Prostate gland (tissue), 2 donors: ENCODE measurements at regions of chr6 and their contacts with region 1.

Region 1: GRCh38 chr6:31680840-31681671 is at the start of gene LY6G5C:
- DNase-seq: peak; percentile 87
- H3K4me3 ChIP-seq: peak within 1 kb of the TSS; percentile 36 to 46
- H3K27ac ChIP-seq: peak within 1 kb of the TSS; percentile 95
- H3K4me1 ChIP-seq: peaks cover 4% of the 10 kb centered on the region
- H3K27me3 ChIP-seq: no peaks in the 10 kb centered on the region
- CTCF ChIP-seq: peak; percentile 63 to 94 (median 79)
- POLR2A ChIP-seq: peak; percentile 9
- total RNA-seq, gene LY6G5C: 1.6 to 2.6 TPM

Region 2: DNA sequence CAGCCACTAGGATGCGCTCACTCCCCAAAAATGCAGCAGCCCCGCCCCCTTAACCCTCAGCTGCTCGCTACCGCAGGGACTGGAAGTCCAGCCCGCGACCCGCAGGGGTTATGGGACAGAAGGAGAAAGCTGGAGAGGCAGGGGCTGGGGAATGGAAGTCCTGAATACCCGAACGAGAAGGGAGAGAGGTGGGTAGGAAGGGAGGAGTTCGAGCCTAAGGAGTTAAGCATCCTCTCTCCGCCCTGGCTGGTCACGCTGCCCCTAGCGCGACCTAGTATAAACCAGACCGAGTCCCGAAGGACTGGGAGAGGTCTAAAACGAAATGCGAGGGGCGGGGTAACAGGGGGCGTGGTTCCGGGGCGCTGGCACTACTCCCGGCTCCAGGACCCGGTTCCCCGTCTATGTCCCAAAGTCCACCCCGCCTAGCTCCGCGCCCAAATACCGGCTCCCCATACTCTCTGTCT is 48.5 kb after region 1 on chr6:
- intact Hi-C with region 1: loop called (anchors 5 kb)
- DNase-seq: peak; percentile 88
- H3K4me3 ChIP-seq: peak overlapping the region; percentile 83 to 88
- H3K27ac ChIP-seq: peak overlapping the region; percentile 98 to 99
- H3K4me1 ChIP-seq: peaks cover 10% of the 10 kb centered on the region
- H3K27me3 ChIP-seq: no peaks in the 10 kb centered on the region
- CTCF ChIP-seq: peak in 3 of 4 experiments; percentile 68 to 82 (median 77)
- POLR2A ChIP-seq: peak; percentile 70

Region 3: DNA sequence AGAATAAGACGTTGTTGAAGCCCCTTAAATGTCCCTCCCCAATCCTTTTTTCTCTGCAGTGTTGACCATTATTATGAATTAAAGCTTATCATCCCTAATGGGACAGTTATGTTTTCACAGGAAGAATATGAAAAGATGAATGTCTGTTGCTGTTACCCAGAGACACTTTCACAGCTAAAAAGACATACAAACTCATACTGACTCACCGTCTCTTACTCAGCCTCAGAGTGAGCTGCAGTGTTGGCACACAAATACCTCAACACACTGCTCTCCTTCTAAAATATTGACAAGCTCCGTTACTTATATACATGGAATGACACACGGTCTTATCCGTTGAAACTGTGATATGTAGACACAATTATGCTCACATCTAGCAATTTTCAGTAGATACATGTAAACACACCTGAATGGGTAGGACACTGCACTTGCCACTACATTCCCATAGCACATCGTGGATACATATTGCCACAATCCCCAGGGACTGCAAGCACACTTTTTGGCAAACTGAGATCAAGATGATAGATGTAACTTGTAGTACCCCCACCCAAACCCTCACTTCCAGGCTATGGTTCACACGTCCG is 71.8 kb after region 1 on chr6:
- intact Hi-C with region 1: no loop called
- DNase-seq: no peak
- H3K4me3 ChIP-seq: no peak overlapping the region
- H3K27ac ChIP-seq: no peak overlapping the region
- H3K4me1 ChIP-seq: no peaks in the 10 kb centered on the region
- H3K27me3 ChIP-seq: no peaks in the 10 kb centered on the region
- CTCF ChIP-seq: no peak
- POLR2A ChIP-seq: no peak

Region 4: DNA sequence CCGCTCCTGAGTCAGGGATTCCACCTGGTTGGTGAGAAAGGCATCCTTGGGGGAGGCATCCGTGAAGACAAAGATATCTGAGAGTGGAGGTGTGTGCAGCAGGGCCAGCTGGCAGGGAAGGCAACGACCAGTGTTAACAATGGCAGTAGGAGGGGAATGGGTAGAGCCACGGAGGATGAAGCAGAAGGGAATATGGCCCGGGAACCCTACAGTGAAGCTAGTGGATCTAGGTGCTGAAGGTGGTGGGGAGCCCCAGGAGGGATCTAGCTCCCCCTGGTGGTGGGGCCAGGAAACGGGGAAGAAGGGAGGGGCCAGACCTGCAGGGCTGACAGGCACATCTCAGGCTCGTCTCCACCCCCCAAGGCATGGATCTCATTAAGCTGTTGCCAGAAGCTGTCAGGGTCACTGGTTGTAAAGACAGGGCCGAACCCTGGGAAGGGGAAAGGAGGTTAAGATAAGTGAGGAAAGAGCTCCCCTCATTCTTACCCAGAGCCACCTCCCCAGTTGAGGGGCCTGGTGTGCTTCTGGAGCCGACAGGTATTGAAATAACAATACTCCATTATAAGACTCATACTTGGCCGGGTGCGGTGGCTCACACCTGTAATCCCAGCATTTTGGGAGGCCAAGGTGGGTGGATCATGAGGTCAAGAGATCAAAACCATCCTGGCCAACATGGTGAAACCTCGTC is 88.8 kb after region 1 on chr6:
- intact Hi-C with region 1: loop called (anchors 5 kb)
- DNase-seq: peak; percentile 65
- H3K4me3 ChIP-seq: no peak overlapping the region
- H3K27ac ChIP-seq: no peak overlapping the region
- H3K4me1 ChIP-seq: no peaks in the 10 kb centered on the region
- H3K27me3 ChIP-seq: no peaks in the 10 kb centered on the region
- CTCF ChIP-seq: peak; percentile 55 to 82 (median 75)
- POLR2A ChIP-seq: no peak

Region 5: GRCh38 chr6:31834434-31835198 is 153.6 kb after region 1 on chr6:
- intact Hi-C with region 1: loop called (anchors 5 kb)
- DNase-seq: peak; percentile 81
- H3K4me3 ChIP-seq: peak overlapping the region; percentile 70 to 80
- H3K27ac ChIP-seq: peak overlapping the region; percentile 97
- H3K4me1 ChIP-seq: peaks cover 19% of the 10 kb centered on the region
- H3K27me3 ChIP-seq: no peaks in the 10 kb centered on the region
- CTCF ChIP-seq: no peak
- POLR2A ChIP-seq: peak; percentile 65

Region 6: GRCh38 chr6:31945507-31946369 is 264.7 kb after region 1 on chr6 and contains the start of gene CFB:
- intact Hi-C with region 1: loop called (anchors 5 kb)
- DNase-seq: peak; percentile 83
- H3K4me3 ChIP-seq: no peak within 1 kb of the TSS
- H3K27ac ChIP-seq: peak within 1 kb of the TSS; percentile 84 to 85
- H3K4me1 ChIP-seq: peaks cover 13% of the 10 kb centered on the region
- H3K27me3 ChIP-seq: no peaks in the 10 kb centered on the region
- CTCF ChIP-seq: peak in 1 of 4 experiments; percentile 3
- POLR2A ChIP-seq: peak; percentile 63
- total RNA-seq, gene CFB: 32.1 to 48.6 TPM